CD8-positive, alpha-beta memory T cell (primary cell): ENCODE measurements at regions of chr7 and their contacts with region 1.

Region 1: DNA sequence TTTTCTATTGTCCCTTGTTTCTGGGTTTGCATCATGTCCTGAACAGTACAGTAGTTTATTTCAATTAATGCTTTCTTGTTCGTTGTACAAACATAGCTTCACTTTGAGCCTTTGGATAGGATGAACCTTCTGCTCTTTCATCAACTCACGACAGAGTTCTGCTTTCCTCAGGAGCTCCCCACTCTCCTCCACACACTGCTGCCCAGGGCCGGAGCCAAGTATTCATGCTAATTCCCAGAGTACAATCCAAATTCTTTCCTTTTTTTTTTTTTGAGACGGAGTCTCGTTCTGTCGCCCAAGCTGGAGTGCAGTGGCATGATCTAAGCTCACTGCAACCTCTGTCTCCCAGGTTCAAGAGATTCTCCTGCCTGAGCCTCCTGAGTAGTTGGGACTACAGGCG is 7.5 kb upstream of the NUP205 start:
- DNase-seq: no peak
- H3K4me3 ChIP-seq: no peak overlapping the region
- H3K4me3 Mint-ChIP-seq: no peak overlapping the region
- H3K27ac ChIP-seq: no peak overlapping the region
- H3K27ac Mint-ChIP-seq: no peak overlapping the region
- H3K4me1 ChIP-seq: no peaks in the 10 kb centered on the region
- H3K4me1 Mint-ChIP-seq: no peaks in the 10 kb centered on the region
- H3K27me3 ChIP-seq: no peaks in the 10 kb centered on the region
- H3K27me3 Mint-ChIP-seq: peaks cover 6 to 23% of the 10 kb centered on the region in 2 donors

Region 2: DNA sequence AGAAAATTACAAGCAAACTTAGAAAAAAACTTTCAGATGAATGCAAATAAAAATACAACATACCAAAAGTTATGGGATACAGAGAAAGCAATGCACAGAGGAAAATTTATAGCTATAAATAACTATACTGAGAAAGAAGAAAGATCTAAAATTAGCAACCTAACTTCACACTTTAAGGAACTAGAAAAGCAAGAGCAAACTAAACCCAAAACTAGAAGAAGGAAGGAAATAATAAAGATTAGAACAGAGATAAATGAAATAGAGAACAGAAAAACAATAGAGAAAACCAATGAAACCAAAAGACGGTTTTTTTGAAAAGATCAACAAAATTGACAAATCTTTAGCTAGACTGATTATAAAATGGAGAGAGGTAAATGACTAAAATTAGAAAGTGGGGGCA is 326.2 kb before region 1 on chr7:
- CTCF ChIA-PET with region 1: no interaction called
- POLR2A ChIA-PET with region 1: interaction called, 18 read pairs
- DNase-seq: no peak
- H3K4me3 ChIP-seq: no peak overlapping the region
- H3K4me3 Mint-ChIP-seq: no peak overlapping the region
- H3K27ac ChIP-seq: no peak overlapping the region
- H3K27ac Mint-ChIP-seq: no peak overlapping the region
- H3K4me1 ChIP-seq: no peaks in the 10 kb centered on the region
- H3K4me1 Mint-ChIP-seq: peaks cover 10 to 13% (median 13%) of the 10 kb centered on the region in 3 donors
- H3K27me3 ChIP-seq: no peaks in the 10 kb centered on the region
- H3K27me3 Mint-ChIP-seq: peaks cover 0 to 8% of the 10 kb centered on the region in 2 donors